ENCODE measurements at regions of chr20 and their contacts with region 1.

Region 1: GRCh38 chr20:59850018-59850641 is 83.3 kb downstream of the SYCP2 start:
- H3K4me3 ChIP-seq: no peak overlapping the region
- H3K27ac ChIP-seq: no peak overlapping the region
- H3K4me1 ChIP-seq: no peaks in the 10 kb centered on the region
- CTCF ChIP-seq: no peak

Region 2: DNA sequence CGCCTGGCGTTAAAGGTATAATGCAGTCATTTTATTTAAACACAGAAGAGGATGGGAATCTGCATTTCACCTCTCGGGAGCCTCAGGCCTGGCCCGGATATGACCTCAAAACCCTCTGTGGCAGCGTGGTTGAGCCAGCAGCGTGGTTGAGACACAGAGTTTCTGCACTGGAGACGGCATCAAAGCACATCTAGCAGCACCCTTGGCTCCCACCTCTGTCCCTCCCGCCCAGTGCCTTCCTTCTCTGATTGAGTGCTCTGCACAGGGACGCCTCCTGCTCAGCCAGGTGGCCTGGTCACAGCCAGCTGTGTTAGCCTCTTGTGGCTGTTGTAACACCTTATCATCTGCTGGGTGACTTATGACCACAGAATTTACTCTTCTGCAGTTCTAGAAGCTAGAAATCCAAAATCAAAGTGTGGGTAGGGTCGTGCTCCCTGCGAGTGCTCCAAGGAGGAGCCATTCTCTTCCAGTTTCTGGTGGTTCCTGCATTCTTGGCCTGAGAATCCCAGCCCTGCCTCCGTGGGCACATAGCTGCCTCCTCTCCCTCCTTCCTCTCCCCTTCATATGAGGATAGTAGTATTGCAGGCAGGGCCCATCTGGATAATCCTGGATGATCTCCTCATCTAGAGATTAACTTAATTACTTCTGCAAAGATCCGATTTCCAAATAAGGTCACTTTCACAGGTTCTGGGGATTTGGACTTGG is 73.4 kb before region 1 on chr20:
- CTCF ChIA-PET with region 1: interaction called, 233 read pairs
- POLR2A ChIA-PET with region 1: no interaction called
- H3K4me3 ChIP-seq: no peak overlapping the region
- H3K27ac ChIP-seq: no peak overlapping the region
- H3K4me1 ChIP-seq: no peaks in the 10 kb centered on the region; the same call in 1 of the 2 replicates
- CTCF ChIP-seq: no peak

Region 3: DNA sequence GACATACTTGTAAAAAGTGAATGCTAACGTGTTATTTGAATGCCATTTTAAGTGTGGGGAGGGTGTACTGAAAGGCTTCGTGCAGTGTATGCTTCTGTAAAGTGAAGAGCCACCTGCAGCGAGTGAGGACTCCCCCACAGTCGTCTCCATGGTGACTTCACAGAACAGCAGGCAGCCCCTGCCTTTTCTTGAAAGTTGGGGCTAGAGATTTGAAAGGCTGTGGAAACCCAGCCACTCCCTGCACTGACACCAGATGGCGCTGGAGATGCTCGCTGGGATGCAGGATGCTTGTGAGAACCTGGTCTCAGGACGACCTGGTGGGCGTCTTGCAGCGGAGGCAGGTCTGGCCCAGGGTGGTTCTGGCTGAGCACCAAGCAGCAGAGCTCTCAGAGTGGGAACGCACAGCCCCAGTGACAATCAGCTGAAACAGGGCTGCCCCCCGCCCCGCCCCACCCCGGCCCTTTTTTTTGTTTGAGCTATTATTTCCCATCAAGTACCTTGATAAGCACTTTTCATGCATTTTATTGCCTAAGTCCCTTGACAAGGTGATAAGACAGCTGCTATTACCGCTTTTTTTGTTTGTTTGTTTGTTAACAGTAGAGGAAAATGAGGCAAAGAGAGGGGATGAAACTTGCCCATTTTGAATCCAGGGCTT is 67.0 kb before region 1 on chr20:
- CTCF ChIA-PET with region 1: interaction called, 233 read pairs
- POLR2A ChIA-PET with region 1: interaction called, 3 read pairs
- H3K4me3 ChIP-seq: no peak overlapping the region
- H3K27ac ChIP-seq: no peak overlapping the region
- H3K4me1 ChIP-seq: no peaks in the 10 kb centered on the region
- CTCF ChIP-seq: peak; percentile 81

Region 4: DNA sequence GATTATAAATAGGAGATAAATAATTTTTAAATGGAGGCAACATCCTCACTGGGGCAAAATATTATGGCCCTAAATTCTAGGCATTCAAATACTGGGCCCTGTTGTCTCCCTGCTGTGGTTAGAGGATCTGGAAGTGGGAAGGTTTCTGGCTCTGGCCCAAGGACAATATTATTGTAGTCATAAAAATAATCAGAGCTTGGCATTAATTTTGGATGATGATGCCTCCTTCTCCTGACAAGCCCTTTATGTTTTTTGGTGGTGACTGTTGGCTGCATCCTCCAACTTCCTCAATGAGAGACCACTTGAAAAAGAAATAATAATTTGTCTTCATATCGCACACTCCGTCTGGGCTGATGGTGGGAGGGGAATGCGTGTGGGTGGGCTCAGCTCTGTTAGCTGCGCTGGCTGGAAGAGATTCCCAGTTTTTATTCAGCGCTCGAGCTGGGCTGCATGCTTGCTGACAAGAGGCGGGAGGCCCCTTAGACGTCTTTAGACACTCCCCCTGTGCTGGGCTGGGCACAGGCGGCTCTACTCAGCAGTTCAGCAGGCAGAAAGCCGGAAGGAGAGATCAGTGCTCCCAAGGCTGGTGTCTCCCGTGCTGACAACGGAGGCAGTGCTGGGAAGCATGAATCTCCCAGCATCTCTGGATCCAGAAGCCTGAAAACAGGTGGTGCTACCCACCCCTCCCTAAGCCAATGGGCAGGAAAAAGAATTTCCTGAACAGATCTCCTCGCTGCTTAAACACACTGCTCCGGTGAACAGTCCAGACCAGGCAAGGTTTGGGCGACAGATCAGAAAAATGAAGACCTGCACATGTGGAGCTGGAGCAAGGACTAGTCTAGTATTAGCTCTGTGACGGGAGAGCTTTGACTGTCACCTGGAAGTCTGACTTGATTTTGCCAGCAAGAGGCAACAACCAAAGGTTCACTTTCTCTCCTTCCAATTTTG is 14.4 kb before region 1 on chr20:
- CTCF ChIA-PET with region 1: interaction called, 94 read pairs
- POLR2A ChIA-PET with region 1: interaction called, 3 read pairs
- H3K4me3 ChIP-seq: peak overlapping the region; percentile 16
- H3K27ac ChIP-seq: peak overlapping the region; percentile 77
- H3K4me1 ChIP-seq: peaks cover 22% of the 10 kb centered on the region
- CTCF ChIP-seq: no peak

Region 5: DNA sequence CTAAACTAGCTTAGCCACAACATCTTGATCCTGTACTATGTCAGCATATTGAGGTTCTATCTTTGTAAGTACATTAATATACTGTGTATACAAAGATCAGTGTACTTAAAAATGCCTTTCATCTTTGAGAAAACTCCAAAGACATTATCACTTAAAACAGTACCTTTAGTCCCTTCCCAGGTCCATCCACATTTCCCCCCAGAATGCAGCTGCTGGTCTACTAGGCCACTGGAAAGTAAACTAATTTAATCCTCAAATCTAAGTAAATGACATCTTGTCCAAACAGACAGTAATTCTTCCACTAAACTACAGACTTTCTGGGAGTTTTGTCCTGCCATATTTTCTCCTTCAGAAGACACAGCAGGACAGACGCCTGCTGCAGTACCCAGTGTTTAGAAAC is 14.6 kb after region 1 on chr20:
- CTCF ChIA-PET with region 1: interaction called, 12 read pairs
- POLR2A ChIA-PET with region 1: no interaction called
- H3K4me3 ChIP-seq: no peak overlapping the region
- H3K27ac ChIP-seq: no peak overlapping the region
- H3K4me1 ChIP-seq: peaks cover 10% of the 10 kb centered on the region
- CTCF ChIP-seq: no peak

Region 6: DNA sequence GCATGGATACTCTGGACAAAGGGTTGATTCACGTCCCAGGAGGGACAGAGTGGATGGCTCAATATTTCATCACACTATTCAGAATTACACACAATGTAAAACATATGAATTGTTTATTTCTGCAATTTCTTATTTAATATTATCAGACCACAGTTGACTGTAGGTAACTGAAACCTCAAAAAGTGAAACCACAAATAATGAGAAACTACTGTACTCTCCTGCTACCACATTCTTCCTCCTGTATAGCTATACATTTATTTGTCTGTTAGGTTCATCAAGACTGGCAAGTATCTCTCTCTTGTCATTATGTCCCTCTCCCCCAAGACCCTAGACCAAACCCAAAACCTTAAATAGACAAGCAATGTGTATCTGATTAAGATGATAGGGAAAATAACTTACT is 23.3 kb after region 1 on chr20:
- CTCF ChIA-PET with region 1: interaction called, 15 read pairs
- POLR2A ChIA-PET with region 1: no interaction called
- H3K4me3 ChIP-seq: no peak overlapping the region
- H3K27ac ChIP-seq: no peak overlapping the region
- H3K4me1 ChIP-seq: no peaks in the 10 kb centered on the region
- CTCF ChIP-seq: no peak

Region 7: DNA sequence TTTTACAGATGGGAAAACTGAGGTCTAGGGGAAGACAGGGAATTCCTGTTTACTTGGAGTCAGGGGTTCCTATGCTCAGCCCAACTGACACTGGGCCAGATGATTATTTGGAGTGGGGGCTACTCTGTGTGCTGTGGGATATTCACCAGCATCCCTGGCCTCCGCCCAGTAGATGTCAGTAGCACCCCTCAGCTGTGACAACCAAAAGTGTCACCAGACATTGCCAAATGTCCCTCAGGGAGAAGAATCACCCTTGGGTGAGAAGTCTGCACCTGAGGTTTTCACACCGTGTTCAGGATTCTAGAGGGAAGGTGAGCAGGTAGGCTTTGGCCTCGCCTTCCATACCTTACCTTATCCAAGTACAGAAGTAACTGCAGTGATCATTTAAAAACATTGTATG is 135.7 kb after region 1 on chr20:
- CTCF ChIA-PET with region 1: no interaction called
- POLR2A ChIA-PET with region 1: no interaction called
- H3K4me3 ChIP-seq: no peak overlapping the region
- H3K27ac ChIP-seq: no peak overlapping the region
- H3K4me1 ChIP-seq: no peaks in the 10 kb centered on the region
- CTCF ChIP-seq: no peak

Measured in HEK293 (cell line).